Posterior cingulate gyrus (tissue), 11 donors: ENCODE measurements at regions of chr3 and their contacts with region 1.

Region 1: DNA sequence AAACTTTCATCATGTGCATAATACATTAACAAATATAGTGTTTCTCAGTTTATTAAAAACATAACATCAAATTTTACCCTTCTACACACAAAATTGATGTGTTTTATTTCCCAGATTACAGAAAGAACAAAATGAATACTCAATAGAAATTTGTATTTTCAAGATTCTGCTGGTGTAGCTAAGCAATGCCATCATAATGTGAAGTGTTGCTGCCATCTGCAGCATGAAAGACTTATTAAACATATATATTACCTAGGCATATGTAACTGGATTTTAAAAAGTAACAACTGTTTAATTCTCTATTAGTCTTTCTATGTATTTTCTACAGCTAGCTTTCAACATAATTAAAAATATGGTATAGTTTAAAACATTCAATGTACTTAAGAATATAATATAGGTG is 27.5 kb downstream of the PLSCR5 start:
- DNase-seq: no peak

Region 2: DNA sequence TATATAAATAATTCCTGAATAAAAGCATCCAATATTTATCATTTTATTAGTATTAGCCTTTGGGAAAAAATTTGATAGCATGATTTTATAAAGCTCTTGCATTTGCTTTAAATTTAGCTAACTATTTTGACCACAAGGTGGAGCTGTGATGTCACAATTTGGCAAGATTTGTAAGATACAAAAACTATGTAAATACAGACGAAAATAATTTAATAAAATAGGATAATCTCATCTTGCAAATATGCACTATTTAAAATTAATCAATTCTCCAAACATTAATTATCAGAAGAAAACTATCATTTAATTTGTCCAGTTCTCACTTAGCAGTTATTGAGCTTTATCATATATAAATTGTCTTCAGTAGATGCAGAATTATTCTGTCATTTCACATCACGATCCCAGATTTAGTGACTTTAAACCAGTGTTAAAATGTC is 512.1 kb before region 1 on chr3:
- intact Hi-C with region 1: loop called (anchors 10 kb)
- DNase-seq: no peak

Region 3: GRCh38 chr3:146218880-146219866 is 358.5 kb before region 1 on chr3:
- intact Hi-C with region 1: loop called (anchors 1 kb)
- DNase-seq: peak in 7 of 10 donors; percentile 9 to 58 (median 34)

Region 4: GRCh38 chr3:146334151-146334550 is 243.5 kb before region 1 on chr3:
- intact Hi-C with region 1: loop called (anchors 10 kb)
- DNase-seq: peak in 1 of 10 donors; percentile 83

Region 5: GRCh38 chr3:146431240-146431639 is 146.4 kb before region 1 on chr3:
- intact Hi-C with region 1: no loop called
- DNase-seq: no peak

Region 6: GRCh38 chr3:146544002-146544928 is 33.4 kb before region 1 on chr3 and contains the start of gene PLSCR1:
- intact Hi-C with region 1: no loop called
- DNase-seq: peak; percentile 28 to 95 (median 62)

Region 7: DNA sequence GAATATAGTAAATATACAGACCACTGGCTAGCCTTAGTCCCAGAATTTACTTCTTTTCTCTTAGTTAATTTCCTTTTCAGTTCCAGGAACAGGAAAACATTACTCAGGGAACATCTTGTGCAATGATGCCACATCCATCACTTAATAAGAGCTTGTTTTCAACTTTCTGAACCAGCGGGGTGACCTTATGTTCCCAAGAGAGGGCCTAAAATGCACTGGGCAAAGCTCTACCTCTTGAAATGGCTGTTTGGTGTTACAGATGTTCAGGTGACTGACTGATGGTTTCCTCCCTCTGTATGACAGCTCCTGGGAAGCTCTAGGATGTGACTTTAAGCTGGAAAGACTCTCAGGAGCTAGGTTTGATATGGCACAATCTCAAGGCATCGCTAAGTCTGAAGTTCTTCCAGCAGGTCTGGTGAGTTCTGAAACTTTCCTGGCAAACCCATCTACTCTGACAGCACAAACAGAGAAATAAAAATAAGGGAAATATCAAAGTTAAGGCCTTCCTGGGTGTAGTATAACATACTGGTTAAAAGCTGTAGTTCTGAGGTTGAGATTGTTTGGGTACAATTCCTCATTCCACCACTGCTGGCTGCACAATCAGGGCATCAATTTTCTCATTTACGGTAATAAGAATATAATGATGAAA is 930.1 kb after region 1 on chr3:
- intact Hi-C with region 1: no loop called
- DNase-seq: no peak